Mammary epithelial cell (primary cell): ENCODE measurements at regions of chr1 and their contacts with region 1.

Region 1: GRCh38 chr1:153174624-153175023 is 23.9 kb upstream of the SPRR2G start:
- DNase-seq: peak; percentile 81
- H3K4me3 ChIP-seq: no peak overlapping the region
- H3K27ac ChIP-seq: peak overlapping the region; percentile 32
- H3K4me1 ChIP-seq: peaks cover 20% of the 10 kb centered on the region
- H3K27me3 ChIP-seq: no peaks in the 10 kb centered on the region
- CTCF ChIP-seq: no peak

Region 2: DNA sequence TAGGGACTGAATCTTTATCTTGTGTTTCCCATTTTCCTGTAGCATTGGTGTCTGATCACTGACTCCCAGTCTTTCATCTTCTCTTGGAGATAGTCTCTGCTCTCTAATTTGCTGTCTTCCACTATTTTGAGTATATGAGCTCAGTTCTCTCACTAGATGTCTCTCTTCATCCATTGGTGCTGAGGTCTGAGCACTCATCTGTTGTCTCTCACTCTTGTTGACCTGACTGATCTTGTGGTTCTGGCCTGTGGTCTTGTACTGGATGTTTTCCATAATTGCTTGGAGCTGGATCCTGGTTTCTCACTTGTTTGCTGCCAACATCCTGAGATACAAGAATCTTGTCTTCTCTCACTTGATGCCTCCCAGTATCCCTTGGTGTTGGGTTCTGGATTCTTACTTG is 1112.7 kb before region 1 on chr1:
- CTCF ChIA-PET with region 1: no interaction called
- dilution Hi-C with region 1: no loop called
- in situ Hi-C with region 1: no loop called
- intact Hi-C with region 1: no loop called
- DNase-seq: no peak
- H3K4me3 ChIP-seq: no peak overlapping the region
- H3K27ac ChIP-seq: no peak overlapping the region
- H3K4me1 ChIP-seq: no peaks in the 10 kb centered on the region
- H3K27me3 ChIP-seq: peaks cover 4% of the 10 kb centered on the region
- CTCF ChIP-seq: no peak

Region 3: GRCh38 chr1:153100236-153100635 is 74.4 kb before region 1 on chr1:
- CTCF ChIA-PET with region 1: no interaction called
- dilution Hi-C with region 1: no loop called
- in situ Hi-C with region 1: no loop called
- intact Hi-C with region 1: loop called (anchors 2 kb)
- DNase-seq: peak; percentile 98
- H3K4me3 ChIP-seq: no peak overlapping the region
- H3K27ac ChIP-seq: peak overlapping the region; percentile 93
- H3K4me1 ChIP-seq: peaks cover 11% of the 10 kb centered on the region
- H3K27me3 ChIP-seq: no peaks in the 10 kb centered on the region
- CTCF ChIP-seq: no peak